ENCODE measurements at regions of chr3 and their contacts with region 1.

Region 1: DNA sequence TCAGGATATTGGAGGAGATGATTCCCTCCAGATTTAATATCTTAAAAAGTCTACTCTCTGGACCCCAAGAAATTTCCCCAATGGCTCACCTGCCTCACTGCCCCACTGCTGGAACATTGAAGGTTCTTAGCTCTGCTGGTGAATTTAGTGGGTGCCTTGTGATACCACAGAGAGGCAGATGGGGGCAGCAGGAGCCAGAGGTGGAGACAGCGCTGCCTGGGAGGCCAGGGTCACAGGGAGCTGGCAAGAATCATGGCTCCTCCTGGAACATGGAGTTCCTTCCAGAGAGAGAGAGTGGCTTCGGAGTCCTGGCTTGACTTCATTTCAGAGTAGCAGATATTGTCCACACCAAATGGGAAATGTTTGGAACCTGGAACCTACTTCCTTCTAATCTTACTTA is 263.5 kb upstream of the CFAP20DC start:
- DNase-seq: peak; percentile 20 to 70 (median 55)
- ATAC-seq: peak; percentile 88 to 96 (median 96)
- H3K4me3 ChIP-seq: no peak overlapping the region
- H3K27ac ChIP-seq: no peak overlapping the region
- H3K4me1 ChIP-seq: peaks cover 0 to 8% (median 0%) of the 10 kb centered on the region in 12 donors
- H3K27me3 ChIP-seq: no peaks in the 10 kb centered on the region
- CTCF ChIP-seq: peak; percentile 34 to 60 (median 51)
- POLR2A ChIP-seq: no peak

Region 2: GRCh38 chr3:59251869-59252268 is 61.5 kb before region 1 on chr3:
- intact Hi-C with region 1: no loop called
- DNase-seq: no peak
- ATAC-seq: peak in 2 of 4 donors; percentile 35 to 41
- H3K4me3 ChIP-seq: no peak overlapping the region
- H3K27ac ChIP-seq: no peak overlapping the region
- H3K4me1 ChIP-seq: peaks cover 0 to 8% (median 0%) of the 10 kb centered on the region in 12 donors
- H3K27me3 ChIP-seq: no peaks in the 10 kb centered on the region
- CTCF ChIP-seq: no peak
- POLR2A ChIP-seq: no peak

Region 3: GRCh38 chr3:59374818-59375211 is 61.5 kb after region 1 on chr3:
- intact Hi-C with region 1: loop called in 1 of 10 experiments (anchors 10 kb)
- DNase-seq: no peak
- ATAC-seq: no peak
- H3K4me3 ChIP-seq: no peak overlapping the region
- H3K27ac ChIP-seq: no peak overlapping the region
- H3K4me1 ChIP-seq: peaks cover 0 to 13% (median 0%) of the 10 kb centered on the region in 12 donors
- H3K27me3 ChIP-seq: no peaks in the 10 kb centered on the region
- CTCF ChIP-seq: no peak
- POLR2A ChIP-seq: no peak

Region 4: DNA sequence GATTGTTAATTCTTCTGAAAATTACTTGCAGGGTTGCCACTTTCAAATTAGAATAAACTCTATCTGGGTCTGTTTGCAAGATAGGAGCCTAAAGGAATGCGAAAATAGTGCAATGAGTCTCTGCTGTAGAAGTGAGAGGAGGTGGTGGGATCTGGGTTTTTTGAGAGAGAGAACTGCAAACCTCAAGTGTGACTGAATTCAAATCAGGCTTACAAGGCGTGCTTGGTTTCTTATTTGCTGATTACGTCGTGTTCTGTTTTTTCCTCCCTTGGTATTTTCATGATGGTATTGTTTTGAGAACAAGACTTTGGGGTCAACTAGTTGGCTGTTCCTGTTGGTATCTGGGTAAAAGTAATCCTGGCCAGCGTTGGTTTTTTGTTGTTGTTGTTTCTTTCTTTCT is 227.3 kb after region 1 on chr3:
- intact Hi-C with region 1: loop called in 1 of 10 experiments (anchors 10 kb)
- DNase-seq: no peak
- ATAC-seq: no peak
- H3K4me3 ChIP-seq: no peak overlapping the region
- H3K27ac ChIP-seq: no peak overlapping the region
- H3K4me1 ChIP-seq: peaks cover 0 to 18% (median 2%) of the 10 kb centered on the region in 12 donors
- H3K27me3 ChIP-seq: no peaks in the 10 kb centered on the region
- CTCF ChIP-seq: no peak
- POLR2A ChIP-seq: no peak

Region 5: DNA sequence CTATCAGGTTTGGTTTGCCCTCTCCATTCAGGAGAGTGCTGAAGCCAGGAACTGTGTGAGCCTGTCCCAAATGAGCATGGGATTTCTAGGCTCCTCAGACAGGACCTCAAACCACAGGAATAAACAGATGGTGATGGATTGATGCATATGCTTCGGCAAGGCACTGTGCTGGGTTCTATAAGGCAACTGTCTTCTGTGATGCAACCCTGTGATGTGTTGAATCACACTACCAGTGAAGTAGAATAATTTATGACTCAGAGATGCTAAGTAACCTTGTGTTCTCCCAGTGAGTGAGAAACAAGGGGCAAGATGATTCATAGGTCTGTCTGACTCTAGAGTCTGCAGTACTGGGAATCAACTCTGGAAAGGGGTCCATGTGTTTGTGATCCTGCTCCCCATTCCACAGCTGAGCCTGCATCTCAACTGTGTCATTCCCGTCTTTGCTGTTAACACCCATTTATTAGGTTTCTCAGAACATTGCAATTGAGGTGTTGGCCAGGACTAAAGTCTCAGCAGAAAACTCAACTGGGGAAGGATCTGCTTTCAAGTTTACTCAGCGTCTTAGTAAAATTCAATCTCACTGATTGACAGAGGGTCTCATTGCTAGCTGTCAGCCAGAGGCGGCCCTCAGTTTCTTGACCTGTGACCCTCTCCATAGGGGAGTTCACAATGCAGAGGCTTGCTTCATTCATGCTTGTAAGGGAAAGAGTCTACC is 246.5 kb after region 1 on chr3:
- intact Hi-C with region 1: loop called in 1 of 10 experiments (anchors 10 kb)
- DNase-seq: no peak
- ATAC-seq: peak in 1 of 4 donors; percentile 71
- H3K4me3 ChIP-seq: no peak overlapping the region
- H3K27ac ChIP-seq: no peak overlapping the region
- H3K4me1 ChIP-seq: no peaks in the 10 kb centered on the region
- H3K27me3 ChIP-seq: no peaks in the 10 kb centered on the region
- CTCF ChIP-seq: no peak
- POLR2A ChIP-seq: no peak

Region 6: DNA sequence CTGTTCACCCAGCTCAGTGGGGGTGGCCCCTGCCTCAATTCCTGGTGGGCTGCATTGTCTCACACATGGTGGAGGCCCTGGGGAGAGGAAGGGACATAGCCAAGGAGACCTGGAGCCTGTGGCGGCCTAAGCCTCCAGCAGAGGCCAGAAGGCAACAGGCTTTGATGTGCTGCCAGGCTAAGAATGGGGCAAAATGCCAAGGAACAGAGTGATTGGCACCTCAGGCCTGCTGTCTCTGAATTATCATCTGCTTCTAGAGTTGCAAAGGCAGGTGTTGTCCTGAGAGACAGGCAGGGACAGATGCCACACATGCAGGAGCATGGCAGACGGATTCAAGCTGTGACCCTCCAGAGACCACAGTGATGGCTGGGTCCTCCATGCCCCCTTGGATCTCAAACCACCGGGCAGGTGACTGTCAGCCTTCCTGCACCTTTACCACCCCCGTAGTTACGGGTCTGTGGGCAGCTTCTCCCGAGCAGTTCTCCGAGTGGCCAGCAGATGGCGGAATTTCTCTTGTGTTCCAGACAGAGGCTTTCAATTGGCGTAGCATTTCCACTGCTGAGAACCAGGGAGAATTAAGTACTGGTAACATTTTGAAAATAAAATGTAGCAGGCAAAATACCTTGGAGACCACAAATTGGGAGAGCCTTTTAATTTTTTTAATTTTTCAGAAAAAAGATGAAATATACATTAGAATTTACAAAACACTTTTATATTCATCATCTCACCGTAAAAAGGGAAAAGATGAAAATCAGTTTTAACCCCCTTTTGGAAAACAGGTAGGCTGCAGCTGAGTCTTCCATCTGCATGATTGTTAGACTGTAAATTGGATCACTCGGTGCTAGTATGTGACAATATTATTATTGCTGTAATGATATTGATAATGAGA is 262.0 kb after region 1 on chr3:
- intact Hi-C with region 1: loop called in 5 of 10 experiments (anchors 10 kb)
- DNase-seq: peak; percentile 75 to 89 (median 82)
- ATAC-seq: peak; percentile 72 to 84 (median 81)
- H3K4me3 ChIP-seq: no peak overlapping the region
- H3K27ac ChIP-seq: no peak overlapping the region
- H3K4me1 ChIP-seq: peaks cover 0 to 13% (median 0%) of the 10 kb centered on the region in 12 donors
- H3K27me3 ChIP-seq: no peaks in the 10 kb centered on the region
- CTCF ChIP-seq: peak; percentile 93 to 98 (median 94)
- POLR2A ChIP-seq: no peak